Activated CD4-positive, alpha-beta T cell treated with anti-CD3 and anti-CD28 coated beads, Interleukin-2, amount 10 ng/mL, durations not matched to agents 24 days and 14 days (primary cell): ENCODE measurements at regions of chr16 and their contacts with region 1.

Region 1: GRCh38 chr16:83898463-83899271 is at the start of gene MLYCD:
- DNase-seq: peak; percentile 94
- H3K4me3 Mint-ChIP-seq: peak within 1 kb of the TSS; percentile 94
- H3K27ac Mint-ChIP-seq: peak within 1 kb of the TSS; percentile 88
- H3K4me1 Mint-ChIP-seq: peaks cover 17% of the 10 kb centered on the region
- H3K27me3 Mint-ChIP-seq: peaks cover 13% of the 10 kb centered on the region
- total RNA-seq, gene MLYCD: 5.0 and 5.3 TPM in 2 replicates

Region 2: DNA sequence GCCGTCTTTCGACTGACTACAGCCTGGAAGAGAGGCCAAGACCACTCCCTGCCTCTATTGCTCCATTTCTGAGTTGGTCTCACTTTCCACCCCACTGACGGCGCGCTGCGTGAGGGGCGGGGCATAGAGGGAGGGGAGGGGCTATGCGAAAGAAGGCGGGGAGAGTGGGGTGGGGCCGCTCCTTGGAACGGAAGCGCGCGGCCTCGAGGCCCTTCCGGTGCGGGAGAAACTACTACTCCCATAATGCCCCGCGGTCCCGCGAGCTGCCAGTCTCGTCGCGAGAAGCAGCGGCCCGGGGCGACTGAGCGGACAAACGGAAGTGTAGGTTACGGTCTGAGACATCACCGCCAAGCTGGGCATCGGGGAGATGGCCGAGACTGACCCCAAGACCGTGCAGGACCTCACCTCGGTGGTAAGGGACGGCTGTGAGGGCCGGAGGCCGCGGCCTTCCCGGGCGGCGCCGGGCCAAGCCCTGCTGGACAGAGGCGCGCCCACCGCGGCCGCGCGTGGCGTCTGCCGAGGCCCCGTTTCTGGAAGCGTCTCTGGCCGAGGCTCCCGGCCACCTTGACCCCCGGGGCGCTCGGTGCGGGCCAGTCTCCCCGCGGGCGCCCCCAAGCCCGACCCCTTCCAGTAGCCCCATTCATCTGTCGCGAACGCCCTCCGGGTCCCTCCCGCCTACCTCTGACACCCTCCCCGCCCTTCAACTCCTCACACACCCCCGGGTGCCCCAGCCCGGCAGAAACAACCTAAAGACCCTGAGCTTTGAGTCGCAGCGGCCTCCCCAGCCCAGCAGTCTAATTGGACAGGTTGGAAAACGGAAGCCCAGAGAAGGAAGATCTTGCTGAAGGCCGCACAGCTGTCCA is 90.7 kb before region 1 on chr16 and contains the start of gene HSBP1:
- intact Hi-C with region 1: loop called (anchors 1 kb)
- DNase-seq: peak; percentile 98
- H3K4me3 Mint-ChIP-seq: peak within 1 kb of the TSS; percentile 90
- H3K27ac Mint-ChIP-seq: peak within 1 kb of the TSS; percentile 94
- H3K4me1 Mint-ChIP-seq: peaks cover 27% of the 10 kb centered on the region
- H3K27me3 Mint-ChIP-seq: peaks cover 9% of the 10 kb centered on the region
- total RNA-seq, gene HSBP1: 119 and 128 TPM in 2 replicates

Region 3: DNA sequence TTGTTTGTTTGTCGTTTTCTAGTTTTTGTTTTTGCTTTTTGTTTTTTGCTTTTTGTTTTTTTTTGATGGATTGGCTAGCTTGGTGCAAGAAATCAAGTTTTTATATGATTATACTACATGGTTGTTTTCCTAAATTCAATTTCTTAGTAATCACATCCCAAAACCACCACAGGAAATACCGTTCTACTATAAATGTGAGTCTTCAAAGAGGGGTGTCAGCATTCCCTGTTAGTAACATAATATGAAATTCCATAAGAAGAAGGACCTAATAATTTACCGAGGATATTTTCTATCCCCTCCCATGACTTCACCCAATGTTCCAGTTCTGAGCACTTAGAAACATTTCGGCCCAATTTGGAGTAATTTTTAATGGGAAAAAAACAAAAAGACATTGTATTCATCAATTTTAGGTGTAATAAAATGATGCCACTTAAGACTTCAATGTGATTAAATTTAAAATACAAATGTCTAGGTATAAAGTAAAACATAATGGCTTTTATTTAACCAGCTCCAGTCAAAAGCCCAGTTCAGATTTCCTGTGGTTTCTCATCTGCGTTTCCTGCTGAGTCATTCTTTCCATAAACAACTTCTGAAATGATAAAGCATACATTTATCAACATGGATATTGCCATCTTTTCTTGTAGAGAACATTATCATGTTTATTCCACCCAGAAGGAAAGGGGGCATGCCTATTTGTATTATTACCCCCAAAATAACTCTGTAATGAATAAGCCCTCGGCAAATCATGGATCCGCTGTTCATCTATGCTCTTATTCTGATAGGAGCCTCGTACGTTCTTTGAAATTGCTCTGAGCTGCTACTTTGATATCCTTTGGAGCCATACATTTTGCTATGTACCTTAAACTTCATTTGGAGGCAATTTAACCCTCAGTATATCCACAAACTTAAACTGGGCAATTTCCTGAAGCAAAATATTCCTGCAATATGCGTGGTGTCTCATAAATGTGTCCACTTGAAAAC is 62.8 kb before region 1 on chr16:
- intact Hi-C with region 1: loop called (anchors 2 kb)
- DNase-seq: peak; percentile 71
- H3K4me3 Mint-ChIP-seq: no peak overlapping the region
- H3K27ac Mint-ChIP-seq: peak overlapping the region; percentile 59
- H3K4me1 Mint-ChIP-seq: peaks cover 14% of the 10 kb centered on the region
- H3K27me3 Mint-ChIP-seq: peaks cover 38% of the 10 kb centered on the region

Region 4: GRCh38 chr16:84759061-84759460 is 860.4 kb after region 1 on chr16:
- intact Hi-C with region 1: no loop called
- DNase-seq: no peak
- H3K4me3 Mint-ChIP-seq: no peak overlapping the region
- H3K27ac Mint-ChIP-seq: no peak overlapping the region
- H3K4me1 Mint-ChIP-seq: peaks cover 36% of the 10 kb centered on the region
- H3K27me3 Mint-ChIP-seq: no peaks in the 10 kb centered on the region